ENCODE measurements at regions of chr1 and their contacts with region 1.

Region 1: DNA sequence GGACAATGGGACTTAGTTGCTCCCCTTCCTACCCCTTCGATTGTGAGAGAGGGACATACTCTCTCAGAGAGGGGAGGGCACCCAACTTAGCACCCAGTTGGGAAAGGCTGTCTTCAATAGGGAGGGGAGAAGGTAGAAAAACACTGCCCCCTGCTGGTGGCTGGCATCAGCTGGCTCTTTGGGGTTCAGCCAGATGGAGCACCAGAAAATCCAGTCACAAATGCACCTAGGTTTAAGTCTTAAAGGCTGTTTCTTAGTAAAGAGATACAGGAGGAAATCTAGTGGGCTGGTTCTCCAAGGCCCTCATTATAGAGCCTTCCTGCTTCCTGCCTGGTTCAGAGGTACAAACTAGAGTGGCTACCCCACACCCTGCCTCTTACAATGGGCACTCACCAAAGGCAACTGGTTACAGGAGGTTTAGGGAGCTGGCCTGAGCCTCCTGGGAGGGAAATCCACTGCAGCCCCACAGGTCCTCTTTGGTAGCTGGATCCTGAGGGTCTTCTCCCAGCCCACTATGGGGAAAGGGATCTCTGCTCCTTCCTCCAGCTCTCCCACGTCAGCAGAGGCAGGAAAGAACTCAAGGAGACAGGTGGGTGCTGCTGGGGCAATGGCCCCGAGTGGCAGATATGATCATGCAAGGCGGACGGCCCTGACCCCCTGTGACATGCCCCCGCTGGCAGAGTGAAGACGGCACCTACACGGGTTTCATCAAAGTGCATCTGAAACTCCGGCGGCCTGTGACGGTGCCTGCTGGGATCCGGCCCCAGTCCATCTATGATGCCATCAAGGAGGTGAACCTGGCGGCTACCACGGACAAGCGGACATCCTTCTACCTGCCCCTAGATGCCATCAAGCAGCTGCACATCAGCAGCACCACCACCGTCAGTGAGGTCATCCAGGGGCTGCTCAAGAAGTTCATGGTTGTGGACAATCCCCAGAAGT is 28.3 kb downstream of the EIF2D start:
- DNase-seq: peak; percentile 91
- ATAC-seq: peak; percentile 22
- H3K4me3 Mint-ChIP-seq: peak overlapping the region; percentile 76
- H3K27ac Mint-ChIP-seq: peak overlapping the region; percentile 100
- H3K4me1 Mint-ChIP-seq: peaks cover 88% of the 10 kb centered on the region
- H3K27me3 Mint-ChIP-seq: no peaks in the 10 kb centered on the region
- CTCF ChIP-seq: peak; percentile 96

Region 2: DNA sequence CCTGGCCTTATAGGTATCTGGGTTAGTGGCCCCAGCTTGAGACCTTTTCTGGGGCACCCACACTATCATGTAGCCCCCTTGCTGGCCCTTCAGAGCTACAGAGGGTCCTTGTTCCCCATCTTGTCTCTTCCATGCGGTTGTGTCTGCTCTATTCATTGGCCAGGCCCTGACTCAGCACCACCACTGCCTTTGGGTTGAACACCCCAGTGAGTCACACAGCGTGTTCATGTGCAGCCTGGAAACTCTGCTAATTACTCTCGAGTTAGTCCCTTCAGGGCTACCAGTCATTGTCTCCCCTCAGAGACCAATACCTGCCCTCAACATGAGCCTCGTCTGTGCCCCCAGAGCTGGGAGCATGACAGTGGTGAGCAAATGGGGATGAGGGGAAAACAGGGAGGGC is 141.9 kb before region 1 on chr1:
- CTCF ChIA-PET with region 1: no interaction called
- POLR2A ChIA-PET with region 1: no interaction called
- intact Hi-C with region 1: no loop called
- DNase-seq: peak; percentile 31
- ATAC-seq: peak; percentile 55
- H3K4me3 Mint-ChIP-seq: no peak overlapping the region
- H3K27ac Mint-ChIP-seq: no peak overlapping the region
- H3K4me1 Mint-ChIP-seq: no peaks in the 10 kb centered on the region
- H3K27me3 Mint-ChIP-seq: no peaks in the 10 kb centered on the region
- CTCF ChIP-seq: no peak

Region 3: GRCh38 chr1:206455666-206456344 is 128.2 kb before region 1 on chr1:
- CTCF ChIA-PET with region 1: no interaction called
- POLR2A ChIA-PET with region 1: no interaction called
- intact Hi-C with region 1: no loop called
- DNase-seq: no peak
- ATAC-seq: no peak
- H3K4me3 Mint-ChIP-seq: no peak overlapping the region
- H3K27ac Mint-ChIP-seq: no peak overlapping the region
- H3K4me1 Mint-ChIP-seq: no peaks in the 10 kb centered on the region
- H3K27me3 Mint-ChIP-seq: no peaks in the 10 kb centered on the region
- CTCF ChIP-seq: no peak

Region 4: GRCh38 chr1:206469933-206470691 is 113.9 kb before region 1 on chr1 and contains the start of gene IKBKE:
- CTCF ChIA-PET with region 1: interaction called, 18 read pairs
- POLR2A ChIA-PET with region 1: interaction called, 4 read pairs
- intact Hi-C with region 1: no loop called
- DNase-seq: peak; percentile 62
- ATAC-seq: peak; percentile 21
- H3K4me3 Mint-ChIP-seq: peak within 1 kb of the TSS; percentile 73
- H3K27ac Mint-ChIP-seq: peak within 1 kb of the TSS; percentile 94
- H3K4me1 Mint-ChIP-seq: peaks cover 90% of the 10 kb centered on the region
- H3K27me3 Mint-ChIP-seq: no peaks in the 10 kb centered on the region
- CTCF ChIP-seq: no peak
- total RNA-seq, gene IKBKE: 14.3 to 14.9 TPM

Region 5: DNA sequence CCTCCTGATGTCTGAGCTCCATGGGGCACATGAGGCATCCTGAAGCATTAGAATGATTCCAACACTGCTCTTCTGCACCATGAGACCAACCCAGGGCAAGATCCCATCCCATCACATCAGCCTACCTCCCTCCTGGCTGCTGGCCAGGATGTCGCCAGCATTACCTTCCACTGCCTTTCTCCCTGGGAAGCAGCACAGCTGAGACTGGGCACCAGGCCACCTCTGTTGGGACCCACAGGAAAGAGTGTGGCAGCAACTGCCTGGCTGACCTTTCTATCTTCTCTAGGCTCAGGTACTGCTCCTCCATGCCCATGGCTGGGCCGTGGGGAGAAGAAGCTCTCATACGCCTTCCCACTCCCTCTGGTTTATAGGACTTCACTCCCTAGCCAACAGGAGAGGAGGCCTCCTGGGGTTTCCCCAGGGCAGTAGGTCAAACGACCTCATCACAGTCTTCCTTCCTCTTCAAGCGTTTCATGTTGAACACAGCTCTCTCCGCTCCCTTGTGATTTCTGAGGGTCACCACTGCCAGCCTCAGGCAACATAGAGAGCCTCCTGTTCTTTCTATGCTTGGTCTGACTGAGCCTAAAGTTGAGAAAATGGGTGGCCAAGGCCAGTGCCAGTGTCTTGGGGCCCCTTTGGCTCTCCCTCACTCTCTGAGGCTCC is 87.7 kb before region 1 on chr1:
- CTCF ChIA-PET with region 1: interaction called, 85 read pairs
- POLR2A ChIA-PET with region 1: interaction called, 5 read pairs
- intact Hi-C with region 1: no loop called
- DNase-seq: no peak
- ATAC-seq: peak; percentile 32
- H3K4me3 Mint-ChIP-seq: no peak overlapping the region
- H3K27ac Mint-ChIP-seq: peak overlapping the region; percentile 79
- H3K4me1 Mint-ChIP-seq: peaks cover 14% of the 10 kb centered on the region
- H3K27me3 Mint-ChIP-seq: no peaks in the 10 kb centered on the region
- CTCF ChIP-seq: no peak

Region 6: GRCh38 chr1:206537141-206537540 is 46.8 kb before region 1 on chr1:
- CTCF ChIA-PET with region 1: interaction called, 259 read pairs
- POLR2A ChIA-PET with region 1: no interaction called
- intact Hi-C with region 1: no loop called
- DNase-seq: no peak
- ATAC-seq: no peak
- H3K4me3 Mint-ChIP-seq: no peak overlapping the region
- H3K27ac Mint-ChIP-seq: no peak overlapping the region
- H3K4me1 Mint-ChIP-seq: peaks cover 3% of the 10 kb centered on the region
- H3K27me3 Mint-ChIP-seq: no peaks in the 10 kb centered on the region
- CTCF ChIP-seq: no peak

Region 7: GRCh38 chr1:206563367-206564207 is 20.4 kb before region 1 on chr1:
- CTCF ChIA-PET with region 1: interaction called, 583 read pairs
- POLR2A ChIA-PET with region 1: interaction called, 1,021 read pairs
- intact Hi-C with region 1: loop called (anchors 2 kb)
- DNase-seq: no peak
- ATAC-seq: no peak
- H3K4me3 Mint-ChIP-seq: peak overlapping the region; percentile 96
- H3K27ac Mint-ChIP-seq: peak overlapping the region; percentile 100
- H3K4me1 Mint-ChIP-seq: peaks cover 82% of the 10 kb centered on the region
- H3K27me3 Mint-ChIP-seq: no peaks in the 10 kb centered on the region
- CTCF ChIP-seq: no peak

Region 8: GRCh38 chr1:206635080-206635977 is 51.4 kb after region 1 on chr1 and contains the start of gene DYRK3:
- CTCF ChIA-PET with region 1: interaction called, 10 read pairs
- POLR2A ChIA-PET with region 1: no interaction called
- intact Hi-C with region 1: no loop called
- DNase-seq: peak; percentile 93
- ATAC-seq: peak; percentile 93
- H3K4me3 Mint-ChIP-seq: peak within 1 kb of the TSS; percentile 78
- H3K27ac Mint-ChIP-seq: peak within 1 kb of the TSS; percentile 88
- H3K4me1 Mint-ChIP-seq: peaks cover 25% of the 10 kb centered on the region
- H3K27me3 Mint-ChIP-seq: peaks cover 28% of the 10 kb centered on the region
- CTCF ChIP-seq: no peak
- total RNA-seq, gene DYRK3: 4.7 to 4.9 TPM

Measured in activated CD8-positive, alpha-beta T cell treated with anti-CD3 and anti-CD28 coated beads for 36 hours (primary cell).